BJ (cell line): ENCODE measurements at regions of chr10 and their contacts with region 1.

Region 1: GRCh38 chr10:90288391-90288933 is 569.4 kb downstream of the HTR7 start:
- DNase-seq: no peak
- H3K4me3 ChIP-seq: no peak overlapping the region
- H3K27me3 ChIP-seq: no peaks in the 10 kb centered on the region
- CTCF ChIP-seq: peak; percentile 53

Region 2: GRCh38 chr10:90308223-90308622 is 19.8 kb after region 1 on chr10:
- CTCF ChIA-PET with region 1: no interaction called
- POLR2A ChIA-PET with region 1: no interaction called
- DNase-seq: peak; percentile 75
- H3K4me3 ChIP-seq: no peak overlapping the region
- H3K27me3 ChIP-seq: no peaks in the 10 kb centered on the region
- CTCF ChIP-seq: no peak

Region 3: DNA sequence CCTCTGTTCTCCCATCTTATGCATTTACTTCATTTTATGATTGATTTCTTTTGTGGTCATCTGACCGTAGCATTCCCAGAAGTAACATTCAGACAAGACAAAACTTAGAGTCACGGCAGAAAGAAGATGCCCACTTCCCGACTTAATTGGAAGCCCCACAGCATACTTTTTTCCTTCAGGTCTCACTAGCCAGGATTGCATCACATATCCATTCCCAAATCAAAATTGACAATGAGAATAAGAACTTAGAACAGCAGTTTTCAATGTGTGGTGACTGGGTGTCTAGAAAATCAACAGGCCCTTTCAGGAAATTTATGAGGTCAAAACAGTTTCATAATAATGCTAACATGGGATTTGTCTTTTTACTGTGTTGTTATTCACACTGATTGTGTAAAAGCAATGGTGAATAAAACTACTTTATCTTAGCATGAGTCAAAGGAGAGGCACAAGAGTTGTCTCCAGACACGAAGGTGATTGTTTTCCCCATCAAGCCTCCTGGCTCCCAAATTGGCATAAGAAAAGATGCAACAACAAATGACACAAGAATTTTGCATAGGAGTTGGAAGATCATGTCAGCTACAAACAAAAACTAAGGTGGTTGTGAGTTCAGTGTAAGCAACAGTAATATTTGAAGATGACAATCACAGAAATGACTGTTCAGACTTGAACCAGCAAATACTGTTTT is 75.5 kb after region 1 on chr10:
- CTCF ChIA-PET with region 1: no interaction called
- POLR2A ChIA-PET with region 1: no interaction called
- DNase-seq: no peak
- H3K4me3 ChIP-seq: no peak overlapping the region
- H3K27me3 ChIP-seq: no peaks in the 10 kb centered on the region
- CTCF ChIP-seq: no peak

Region 4: DNA sequence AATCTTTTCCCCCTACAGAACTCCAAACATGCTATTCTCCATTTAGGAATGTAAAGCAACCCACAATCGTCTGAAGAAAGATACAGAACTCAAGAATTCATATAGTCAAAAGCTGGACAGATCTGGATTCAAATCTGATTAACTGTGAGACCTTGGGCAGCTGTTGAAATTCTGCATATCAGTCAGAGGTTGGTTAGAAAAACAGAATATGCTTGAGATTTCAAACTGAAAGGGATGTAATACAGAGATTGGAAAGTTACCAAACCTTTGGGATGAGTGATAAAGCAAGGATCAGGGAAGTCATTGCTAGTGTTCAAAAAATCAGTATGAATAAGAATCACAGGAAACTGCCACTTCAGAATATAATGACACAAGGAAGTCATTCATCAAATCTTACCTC is 162.8 kb after region 1 on chr10:
- CTCF ChIA-PET with region 1: no interaction called
- POLR2A ChIA-PET with region 1: no interaction called
- DNase-seq: no peak
- H3K4me3 ChIP-seq: no peak overlapping the region
- H3K27me3 ChIP-seq: no peaks in the 10 kb centered on the region; the same call in none of the 2 replicates
- CTCF ChIP-seq: no peak

Region 5: DNA sequence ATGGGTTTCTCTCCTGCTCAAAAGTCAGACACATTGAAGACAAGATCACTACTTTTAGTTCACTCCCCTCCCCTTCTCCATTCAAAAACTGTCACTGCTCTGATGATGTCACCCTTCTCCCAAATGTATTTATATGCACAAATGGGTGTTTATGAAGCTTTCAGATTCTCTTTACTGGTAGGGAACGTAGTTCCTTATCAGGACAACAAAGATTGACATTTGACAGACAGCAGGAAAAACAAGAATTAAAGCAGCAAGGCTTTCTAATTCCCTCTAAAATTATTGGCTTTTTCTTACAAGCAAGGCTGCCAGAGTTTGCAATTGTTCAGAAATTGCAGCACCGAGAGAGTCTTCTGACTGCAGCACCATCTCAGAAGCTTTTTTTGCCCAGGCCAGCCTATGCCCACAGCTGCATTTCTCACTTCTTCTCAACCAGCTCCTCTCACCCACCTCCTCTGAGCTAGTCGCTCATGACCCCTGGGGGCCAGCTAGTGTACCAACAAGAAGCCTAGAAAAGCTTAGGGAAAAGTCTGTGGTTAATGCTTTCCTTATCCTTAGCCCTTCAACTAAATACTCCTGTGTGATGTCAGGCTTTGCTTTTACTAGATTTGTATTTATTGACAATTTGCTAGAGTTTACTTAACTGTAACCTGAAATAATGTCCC is 304.3 kb after region 1 on chr10:
- CTCF ChIA-PET with region 1: interaction called, 19 read pairs
- POLR2A ChIA-PET with region 1: no interaction called
- DNase-seq: no peak
- H3K4me3 ChIP-seq: no peak overlapping the region
- H3K27me3 ChIP-seq: peaks cover 1% of the 10 kb centered on the region
- CTCF ChIP-seq: peak; percentile 68